Cardiac septum (tissue), 1 donor: ENCODE measurements at regions of chrX and their contacts with region 1.

Region 1: GRCh38 chrX:23742697-23743622 is at the start of gene ACOT9:
- DNase-seq: peak; percentile 94
- total RNA-seq, gene ACOT9: 72.6 TPM

Region 2: GRCh38 chrX:23554304-23554703 is 188.7 kb before region 1 on chrX:
- intact Hi-C with region 1: no loop called
- DNase-seq: no peak

Region 3: DNA sequence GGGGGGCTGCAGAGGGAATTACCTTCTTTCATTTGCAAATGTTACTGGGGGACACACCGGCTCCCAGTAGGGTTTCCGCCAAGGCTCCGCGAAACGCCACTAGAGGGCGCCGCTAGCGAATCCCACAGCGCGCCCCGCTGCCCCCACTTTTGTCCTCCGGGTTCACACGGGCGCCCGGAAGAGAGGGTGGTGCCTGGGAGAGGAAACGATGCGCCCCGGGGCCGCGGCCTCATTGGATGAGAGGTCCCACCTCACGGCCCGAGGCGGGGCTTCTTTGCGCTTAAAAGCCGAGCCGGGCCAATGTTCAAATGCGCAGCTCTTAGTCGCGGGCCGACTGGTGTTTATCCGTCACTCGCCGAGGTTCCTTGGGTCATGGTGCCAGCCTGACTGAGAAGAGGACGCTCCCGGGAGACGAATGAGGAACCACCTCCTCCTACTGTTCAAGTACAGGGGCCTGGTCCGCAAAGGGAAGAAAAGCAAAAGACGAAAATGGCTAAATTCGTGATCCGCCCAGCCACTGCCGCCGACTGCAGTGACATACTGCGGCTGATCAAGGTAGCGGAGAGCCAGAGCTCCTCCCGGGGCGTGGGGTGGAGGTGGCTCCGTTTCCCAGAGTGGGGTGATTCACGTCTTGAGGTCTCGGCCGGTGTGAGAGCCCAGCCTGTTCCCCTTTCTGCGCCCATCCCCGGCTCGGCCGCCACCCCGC is 40.1 kb after region 1 on chrX and contains the start of gene SAT1:
- intact Hi-C with region 1: loop called (anchors 5 kb)
- DNase-seq: peak; percentile 97
- total RNA-seq, gene SAT1: 156 TPM

Region 4: GRCh38 chrX:23907498-23908218 is 164.7 kb after region 1 on chrX and contains the starts of genes APOO and CXorf58:
- intact Hi-C with region 1: loop called (anchors 2 kb)
- DNase-seq: peak; percentile 95
- total RNA-seq, gene APOO: 76.4 TPM
- total RNA-seq, gene CXorf58: not detected

Region 5: GRCh38 chrX:23938690-23939089 is 195.7 kb after region 1 on chrX:
- intact Hi-C with region 1: no loop called
- DNase-seq: no peak

Region 6: DNA sequence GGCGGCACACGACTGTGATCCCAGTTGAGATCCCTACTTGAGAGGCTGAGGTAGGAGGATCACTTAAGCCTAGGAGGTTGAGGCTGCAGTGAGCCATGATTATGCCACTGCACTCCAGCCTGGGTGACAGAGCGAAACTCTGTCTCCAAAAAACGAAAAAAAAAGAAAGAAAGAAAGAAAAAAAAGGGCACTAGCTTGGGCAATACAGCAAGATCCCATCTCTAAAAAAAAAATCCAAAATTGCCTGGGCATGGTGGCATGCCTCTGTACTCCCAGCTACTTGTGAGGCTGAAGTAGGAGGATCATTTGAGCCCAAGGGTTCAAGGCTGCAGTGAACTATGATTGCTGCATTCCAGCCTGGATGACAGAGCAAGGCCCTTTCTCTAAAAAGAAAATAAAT is 294.8 kb after region 1 on chrX:
- intact Hi-C with region 1: no loop called
- DNase-seq: no peak